ENCODE measurements at regions of chr16 and their contacts with region 1.

Region 1: GRCh38 chr16:88442727-88443576 is 10.1 kb upstream of the ZFPM1 start:
- DNase-seq: peak; percentile 87
- ATAC-seq: peak; percentile 84

Region 2: GRCh38 chr16:88527186-88527936 is 84.4 kb after region 1 on chr16:
- intact Hi-C with region 1: loop called (anchors 1 kb)
- DNase-seq: peak; percentile 78
- ATAC-seq: peak; percentile 67

Region 3: GRCh38 chr16:88539652-88540345 is 96.8 kb after region 1 on chr16:
- intact Hi-C with region 1: no loop called
- DNase-seq: no peak
- ATAC-seq: no peak

Region 4: GRCh38 chr16:88561485-88562369 is 118.8 kb after region 1 on chr16:
- intact Hi-C with region 1: loop called (anchors 2 kb)
- DNase-seq: peak; percentile 76
- ATAC-seq: peak; percentile 51